A549 (cell line): ENCODE measurements at regions of chr7 and their contacts with region 1.

Region 1: DNA sequence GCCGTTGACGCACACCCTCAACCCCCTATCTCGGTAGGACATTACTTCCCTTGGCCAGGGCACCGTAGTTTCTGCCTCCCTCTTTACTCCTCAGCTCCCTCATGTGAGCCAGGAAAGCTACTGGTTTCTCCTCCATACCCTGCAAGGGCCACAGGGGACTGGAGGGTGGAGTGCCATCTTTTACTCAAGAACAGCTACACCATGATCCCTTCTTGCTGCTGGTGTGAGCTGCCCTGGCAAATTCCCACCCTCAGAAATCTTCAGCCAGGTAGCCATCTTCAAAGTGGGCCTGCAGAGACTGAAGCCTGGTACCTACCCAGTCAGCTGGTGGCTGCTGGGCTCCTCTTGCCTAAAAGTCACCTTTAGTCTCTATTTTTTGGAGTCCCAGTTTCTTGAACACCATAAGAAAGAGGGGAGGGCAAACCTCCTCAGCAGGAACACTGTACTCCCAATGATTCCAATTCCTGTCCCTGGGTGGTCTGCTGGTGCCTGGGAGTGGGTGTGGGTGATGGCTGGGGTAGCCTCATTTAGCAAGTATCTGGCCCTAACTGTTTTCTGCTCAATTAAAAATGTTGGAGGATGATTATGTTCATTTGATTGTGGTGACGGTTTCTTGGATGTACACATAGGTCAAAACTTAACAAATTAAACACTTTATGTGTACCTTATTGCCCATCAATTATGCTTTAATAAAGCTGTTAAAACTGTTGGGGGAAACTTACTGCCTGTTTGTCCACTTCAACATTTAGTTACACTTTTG is 105.0 kb upstream of the NPY start:
- DNase-seq: no peak
- ATAC-seq: no peak
- H3K4me3 ChIP-seq: no peak overlapping the region
- H3K27ac ChIP-seq: no peak overlapping the region
- H3K4me1 ChIP-seq: no peaks in the 10 kb centered on the region
- CTCF ChIP-seq: no peak
- EP300 ChIP-seq: no peak
- POLR2A ChIP-seq: no peak
- RAD21 ChIP-seq: no peak

Region 2: GRCh38 chr7:23487670-23488069 is 691.3 kb before region 1 on chr7:
- CTCF ChIA-PET with region 1: no interaction called
- POLR2A ChIA-PET with region 1: interaction called, 10 read pairs
- DNase-seq: no peak
- ATAC-seq: peak in 1 of 2 experiments; percentile 31; a peak in 3 of 6 replicates
- H3K4me3 ChIP-seq: no peak overlapping the region
- H3K27ac ChIP-seq: no peak overlapping the region
- H3K4me1 ChIP-seq: peaks cover 8% of the 10 kb centered on the region; the same call in 1 of the 3 replicates
- CTCF ChIP-seq: no peak
- EP300 ChIP-seq: no peak
- POLR2A ChIP-seq: no peak
- RAD21 ChIP-seq: no peak

Region 3: GRCh38 chr7:24123061-24123460 is 55.9 kb before region 1 on chr7:
- CTCF ChIA-PET with region 1: no interaction called
- POLR2A ChIA-PET with region 1: no interaction called
- DNase-seq: no peak
- ATAC-seq: no peak
- H3K4me3 ChIP-seq: no peak overlapping the region
- H3K27ac ChIP-seq: no peak overlapping the region
- H3K4me1 ChIP-seq: no peaks in the 10 kb centered on the region
- CTCF ChIP-seq: no peak
- EP300 ChIP-seq: no peak
- POLR2A ChIP-seq: no peak
- RAD21 ChIP-seq: no peak